ENCODE measurements at regions of chr11 and their contacts with region 1.

Region 1: DNA sequence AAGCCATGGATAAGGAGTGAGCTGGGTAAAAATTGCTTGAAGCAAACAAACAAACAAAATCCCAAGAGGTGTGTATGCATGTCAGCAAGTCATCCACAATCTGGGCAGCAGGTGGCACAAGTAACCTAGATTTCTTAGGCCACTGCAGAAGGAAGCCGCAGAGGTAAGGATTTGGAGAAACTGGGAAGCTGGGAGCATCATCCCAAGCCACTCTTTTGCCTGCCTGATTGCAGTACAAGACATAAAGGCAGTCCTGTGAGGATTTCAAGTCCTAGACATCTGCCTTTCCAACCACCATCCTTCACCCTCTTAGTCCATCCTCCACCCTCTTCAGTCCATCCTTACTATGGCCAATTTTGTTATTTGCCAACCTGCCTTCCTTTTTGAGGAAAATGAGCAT is 67.2 kb upstream of the BMAL1 start:
- DNase-seq: peak; percentile 62
- ATAC-seq: peak; percentile 76
- H3K4me3 Mint-ChIP-seq: no peak overlapping the region
- H3K27ac Mint-ChIP-seq: no peak overlapping the region
- H3K4me1 Mint-ChIP-seq: peaks cover 32% of the 10 kb centered on the region
- H3K27me3 Mint-ChIP-seq: no peaks in the 10 kb centered on the region
- CTCF ChIP-seq: peak; percentile 38; the same call in 1 of the 2 replicates

Region 2: DNA sequence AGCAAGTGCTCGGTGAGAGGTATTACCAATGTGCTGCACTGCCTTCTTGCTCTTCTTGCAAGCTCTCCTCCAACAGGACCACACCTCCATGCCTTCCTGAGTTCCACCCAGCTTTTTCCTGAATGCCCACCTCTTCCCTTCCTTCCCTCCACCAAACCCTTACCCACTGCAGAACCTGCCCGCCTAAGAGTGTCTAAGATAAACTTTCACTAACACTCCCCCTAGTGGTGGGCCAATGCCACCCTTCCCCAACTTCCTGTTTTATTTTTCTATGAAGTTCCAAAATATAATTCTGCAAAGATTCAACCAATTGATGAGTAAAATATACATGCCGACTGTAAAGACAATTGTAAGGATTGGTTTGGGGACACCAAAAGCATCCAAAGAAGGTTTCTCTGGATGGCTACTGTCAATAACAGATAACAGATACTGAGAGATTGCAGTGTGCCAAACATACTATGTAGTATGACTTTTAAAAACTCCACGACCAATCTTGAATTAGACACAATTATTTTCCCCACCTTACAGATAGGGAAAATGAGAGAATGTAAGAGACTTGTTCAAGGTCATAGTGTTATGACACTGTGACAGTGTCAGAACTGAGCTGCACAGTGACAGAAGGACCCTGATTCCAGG is 28.6 kb after region 1 on chr11:
- CTCF ChIA-PET with region 1: interaction called, 20 read pairs
- POLR2A ChIA-PET with region 1: no interaction called
- DNase-seq: peak; percentile 52
- ATAC-seq: peak; percentile 98
- H3K4me3 Mint-ChIP-seq: no peak overlapping the region
- H3K27ac Mint-ChIP-seq: no peak overlapping the region
- H3K4me1 Mint-ChIP-seq: peaks cover 4% of the 10 kb centered on the region
- H3K27me3 Mint-ChIP-seq: peaks cover 3% of the 10 kb centered on the region; the same call in 1 of the 2 replicates
- CTCF ChIP-seq: peak; percentile 83

Region 3: DNA sequence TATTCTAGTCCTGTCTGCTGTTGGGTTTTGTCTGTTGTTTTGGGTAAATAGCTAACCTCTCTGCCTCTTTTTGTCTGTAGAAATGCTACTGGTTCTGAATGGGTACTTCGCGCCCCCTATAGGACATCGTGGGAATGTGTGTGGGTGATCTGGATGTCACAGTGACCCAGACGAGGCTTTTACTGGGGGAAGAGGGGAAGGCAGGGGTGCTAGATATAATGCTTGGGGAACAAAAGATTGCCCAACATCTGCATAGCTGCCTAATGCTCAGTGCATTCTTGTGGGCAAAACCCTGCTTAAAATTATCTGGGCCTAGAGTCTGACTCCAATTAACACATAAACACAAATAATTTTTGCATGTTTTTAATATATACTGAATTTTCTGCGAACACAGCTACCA is 124.9 kb after region 1 on chr11:
- CTCF ChIA-PET with region 1: interaction called, 38 read pairs
- POLR2A ChIA-PET with region 1: no interaction called
- DNase-seq: peak; percentile 83
- ATAC-seq: peak; percentile 94
- H3K4me3 Mint-ChIP-seq: no peak overlapping the region
- H3K27ac Mint-ChIP-seq: no peak overlapping the region
- H3K4me1 Mint-ChIP-seq: no peaks in the 10 kb centered on the region
- H3K27me3 Mint-ChIP-seq: no peaks in the 10 kb centered on the region
- CTCF ChIP-seq: peak; percentile 79

Region 4: DNA sequence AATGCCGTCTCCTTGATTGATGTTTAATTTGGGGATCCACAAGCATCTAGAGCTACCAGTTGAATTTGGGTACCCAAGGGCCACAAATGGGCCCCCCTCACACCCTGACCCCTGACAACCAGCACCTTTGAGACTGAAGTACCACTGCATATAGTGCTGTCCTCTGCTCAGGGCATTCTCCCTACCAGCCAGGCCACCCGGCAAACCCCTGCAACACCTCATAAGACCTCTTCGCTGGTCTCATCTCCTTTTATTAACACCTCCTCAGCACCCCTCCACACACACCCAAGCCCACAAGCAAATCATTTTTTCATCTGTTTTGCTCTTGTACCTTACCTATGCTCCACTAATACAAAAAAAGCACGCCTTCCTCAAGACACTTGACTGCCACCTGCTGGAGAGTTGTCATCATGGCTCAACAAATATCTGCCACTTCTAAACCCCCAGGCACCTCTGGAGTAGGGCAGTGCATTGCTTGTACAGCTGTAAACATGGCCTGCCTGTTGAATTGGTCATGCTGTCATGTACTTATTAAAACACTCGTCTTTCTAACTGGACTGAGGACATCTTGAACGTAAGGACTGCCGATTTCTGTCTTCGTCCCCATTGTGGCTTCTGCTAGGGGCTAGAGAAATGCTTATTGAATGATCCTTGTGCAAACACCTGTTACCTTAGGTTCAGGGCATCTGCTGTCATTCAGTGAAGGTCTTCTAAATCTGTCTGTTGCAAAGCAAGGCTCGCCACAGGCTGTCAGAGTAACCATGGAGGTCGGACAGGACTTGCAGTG is 133.7 kb after region 1 on chr11:
- CTCF ChIA-PET with region 1: interaction called, 49 read pairs
- POLR2A ChIA-PET with region 1: no interaction called
- DNase-seq: peak; percentile 75
- ATAC-seq: peak; percentile 57
- H3K4me3 Mint-ChIP-seq: no peak overlapping the region
- H3K27ac Mint-ChIP-seq: no peak overlapping the region
- H3K4me1 Mint-ChIP-seq: peaks cover 10% of the 10 kb centered on the region
- H3K27me3 Mint-ChIP-seq: no peaks in the 10 kb centered on the region
- CTCF ChIP-seq: peak; percentile 82

Region 5: GRCh38 chr11:13354335-13354734 is 143.9 kb after region 1 on chr11:
- CTCF ChIA-PET with region 1: interaction called, 13 read pairs
- POLR2A ChIA-PET with region 1: no interaction called
- DNase-seq: peak; percentile 40
- ATAC-seq: peak; percentile 78
- H3K4me3 Mint-ChIP-seq: no peak overlapping the region
- H3K27ac Mint-ChIP-seq: no peak overlapping the region
- H3K4me1 Mint-ChIP-seq: 0 out of 2 replicates have a peak, but pooled peaks cover 3% of the 10 kb centered on the region
- H3K27me3 Mint-ChIP-seq: no peaks in the 10 kb centered on the region
- CTCF ChIP-seq: peak; percentile 27

Region 6: GRCh38 chr11:13384908-13385640 is 174.7 kb after region 1 on chr11:
- CTCF ChIA-PET with region 1: interaction called, 22 read pairs
- POLR2A ChIA-PET with region 1: no interaction called
- DNase-seq: peak; percentile 38
- ATAC-seq: peak; percentile 82
- H3K4me3 Mint-ChIP-seq: no peak overlapping the region
- H3K27ac Mint-ChIP-seq: no peak overlapping the region
- H3K4me1 Mint-ChIP-seq: no peaks in the 10 kb centered on the region
- H3K27me3 Mint-ChIP-seq: no peaks in the 10 kb centered on the region
- CTCF ChIP-seq: no peak

Measured in WTC11 (cell line).